ENCODE measurements at regions of chr2 and their contacts with region 1.

Region 1: GRCh38 chr2:8312861-8313830 is 368.7 kb upstream of the ID2 start:
- DNase-seq: peak; percentile 96
- ATAC-seq: peak; percentile 81
- H3K4me3 ChIP-seq: no peak overlapping the region; the same call in 1 of the 2 replicates
- H3K27ac ChIP-seq: peak overlapping the region; percentile 72
- H3K4me1 ChIP-seq: peaks cover 53% of the 10 kb centered on the region
- H3K27me3 ChIP-seq: no peaks in the 10 kb centered on the region
- CTCF ChIP-seq: no peak
- EP300 ChIP-seq: peak; percentile 46 to 86; a peak in 3 of 4 replicates
- POLR2A ChIP-seq: no peak
- RAD21 ChIP-seq: peak; percentile 29

Region 2: DNA sequence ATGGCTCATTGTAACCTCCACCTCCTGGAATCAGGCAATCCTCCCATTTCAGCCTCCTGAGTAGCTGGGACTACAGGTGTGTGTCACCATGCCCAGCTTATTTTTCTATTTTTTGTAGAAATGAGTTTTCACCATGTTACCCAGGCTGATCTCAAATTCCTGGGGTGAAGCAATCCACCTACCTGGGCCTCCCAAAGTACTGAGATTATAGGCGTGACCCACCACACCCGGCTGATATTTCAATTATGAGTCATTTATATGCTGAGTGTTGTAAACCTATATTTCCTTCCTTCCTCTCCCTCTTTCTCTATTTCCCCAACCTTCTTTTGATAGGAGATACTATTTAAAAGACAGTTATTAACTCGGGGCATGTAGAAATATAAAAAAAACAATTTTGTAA is 100.9 kb before region 1 on chr2:
- CTCF ChIA-PET with region 1: no interaction called
- POLR2A ChIA-PET with region 1: no interaction called
- RAD21 ChIA-PET with region 1: no interaction called
- SMC1A ChIA-PET with region 1: no interaction called
- in situ Hi-C with region 1: no loop called
- intact Hi-C with region 1: no loop called
- DNase-seq: no peak
- ATAC-seq: no peak
- H3K4me3 ChIP-seq: no peak overlapping the region
- H3K27ac ChIP-seq: no peak overlapping the region
- H3K4me1 ChIP-seq: no peaks in the 10 kb centered on the region
- H3K27me3 ChIP-seq: no peaks in the 10 kb centered on the region
- CTCF ChIP-seq: no peak
- EP300 ChIP-seq: no peak
- POLR2A ChIP-seq: no peak
- RAD21 ChIP-seq: no peak

Region 3: DNA sequence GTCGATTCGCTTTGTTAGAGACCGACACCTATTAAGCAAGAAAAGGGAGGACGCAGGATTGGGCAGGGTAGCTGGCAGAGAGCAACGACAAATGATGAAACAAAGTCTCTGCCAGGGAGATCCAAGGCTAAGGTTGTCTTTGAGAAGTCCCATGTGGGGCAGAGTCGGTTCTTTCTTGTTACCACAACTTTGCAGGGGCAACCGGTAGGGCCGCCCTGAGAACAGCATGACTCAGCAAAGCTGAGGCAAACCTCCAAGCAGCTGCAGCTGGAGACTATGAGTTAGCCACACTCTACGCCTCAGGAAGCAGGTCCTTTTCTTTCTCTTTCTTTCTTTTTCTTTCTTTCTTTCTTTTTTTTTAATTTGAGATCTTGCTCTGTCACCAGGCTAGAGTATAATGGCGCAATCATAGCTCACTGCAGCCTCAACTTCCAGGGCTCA is 83.6 kb before region 1 on chr2:
- CTCF ChIA-PET with region 1: interaction called, 6 read pairs
- POLR2A ChIA-PET with region 1: interaction called, 3 read pairs
- RAD21 ChIA-PET with region 1: interaction called, 23 read pairs
- SMC1A ChIA-PET with region 1: interaction called, 13 read pairs
- in situ Hi-C with region 1: no loop called
- intact Hi-C with region 1: loop called (anchors 1 kb)
- DNase-seq: no peak
- ATAC-seq: peak; percentile 92
- H3K4me3 ChIP-seq: no peak overlapping the region
- H3K27ac ChIP-seq: peak overlapping the region; percentile 35
- H3K4me1 ChIP-seq: peaks cover 24% of the 10 kb centered on the region
- H3K27me3 ChIP-seq: no peaks in the 10 kb centered on the region
- CTCF ChIP-seq: no peak
- EP300 ChIP-seq: peak in 1 of 2 experiments; percentile 68; a peak in 2 of 4 replicates
- POLR2A ChIP-seq: no peak
- RAD21 ChIP-seq: no peak; the same call in 1 of the 2 replicates

Region 4: GRCh38 chr2:8277921-8278571 is 35.1 kb before region 1 on chr2:
- CTCF ChIA-PET with region 1: interaction called, 4 read pairs
- POLR2A ChIA-PET with region 1: interaction called, 4 read pairs
- RAD21 ChIA-PET with region 1: interaction called, 17 read pairs
- SMC1A ChIA-PET with region 1: interaction called, 8 read pairs
- in situ Hi-C with region 1: no loop called
- intact Hi-C with region 1: no loop called
- DNase-seq: peak; percentile 56
- ATAC-seq: peak; percentile 95
- H3K4me3 ChIP-seq: peak overlapping the region; percentile 40; the same call in 1 of the 2 replicates
- H3K27ac ChIP-seq: peak overlapping the region; percentile 56
- H3K4me1 ChIP-seq: peaks cover 17% of the 10 kb centered on the region
- H3K27me3 ChIP-seq: no peaks in the 10 kb centered on the region
- CTCF ChIP-seq: no peak
- EP300 ChIP-seq: peak in 1 of 2 experiments; percentile 58; a peak in 1 of 4 replicates
- POLR2A ChIP-seq: no peak
- RAD21 ChIP-seq: no peak

Region 5: DNA sequence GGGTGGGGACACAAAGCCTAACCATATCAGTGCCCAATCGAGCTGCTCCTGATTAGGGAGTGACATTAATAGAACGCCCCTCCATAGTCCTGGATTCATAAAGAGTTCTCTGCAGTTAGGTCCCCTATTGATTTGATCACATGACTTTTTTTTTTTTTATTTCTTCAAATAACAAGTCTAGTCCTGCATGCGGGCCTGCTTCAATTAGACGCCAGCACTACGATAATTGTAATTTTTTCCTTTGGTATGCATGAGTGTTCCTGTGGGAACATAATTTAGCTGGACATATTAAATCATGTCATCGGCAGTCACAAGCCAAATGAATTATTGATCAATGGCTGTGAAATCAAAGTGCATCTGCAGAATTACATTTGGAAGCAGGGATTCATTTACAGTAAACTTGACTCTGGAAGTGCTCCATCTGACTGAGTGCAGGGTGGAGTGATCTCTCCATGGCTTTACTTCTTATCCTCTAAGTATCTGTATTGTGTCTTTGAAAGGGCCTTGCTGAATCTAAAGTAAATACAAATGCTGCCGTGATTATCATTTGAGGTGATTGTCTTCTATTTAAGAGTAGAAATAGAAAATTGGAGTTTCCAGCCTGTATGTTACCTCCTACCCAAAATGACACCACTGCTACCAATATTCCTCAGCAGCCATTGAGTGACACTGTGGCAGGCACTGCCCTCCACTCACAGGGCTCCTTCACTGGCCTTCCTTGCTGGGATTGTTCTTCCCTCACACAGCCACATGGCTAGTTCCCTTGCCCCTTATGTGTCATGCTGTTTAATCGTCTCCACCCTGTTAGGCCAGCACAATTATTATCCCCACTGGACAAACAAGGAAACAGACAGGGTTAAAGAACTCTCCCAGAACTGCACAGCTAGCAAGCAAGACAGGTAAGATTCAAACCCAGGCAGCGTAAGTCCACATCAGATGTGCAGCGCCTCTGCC is 31.3 kb after region 1 on chr2:
- CTCF ChIA-PET with region 1: interaction called, 7 read pairs
- POLR2A ChIA-PET with region 1: no interaction called
- RAD21 ChIA-PET with region 1: interaction called, 8 read pairs
- SMC1A ChIA-PET with region 1: interaction called, 19 read pairs
- in situ Hi-C with region 1: no loop called
- intact Hi-C with region 1: no loop called
- DNase-seq: no peak
- ATAC-seq: no peak
- H3K4me3 ChIP-seq: no peak overlapping the region
- H3K27ac ChIP-seq: no peak overlapping the region
- H3K4me1 ChIP-seq: peaks cover 7% of the 10 kb centered on the region
- H3K27me3 ChIP-seq: no peaks in the 10 kb centered on the region
- CTCF ChIP-seq: no peak
- EP300 ChIP-seq: no peak
- POLR2A ChIP-seq: no peak
- RAD21 ChIP-seq: no peak

Region 6: GRCh38 chr2:8472545-8473323 is 159.6 kb after region 1 on chr2:
- CTCF ChIA-PET with region 1: no interaction called
- POLR2A ChIA-PET with region 1: interaction called, 4 read pairs
- RAD21 ChIA-PET with region 1: interaction called, 25 read pairs
- SMC1A ChIA-PET with region 1: interaction called, 21 read pairs
- in situ Hi-C with region 1: no loop called
- intact Hi-C with region 1: no loop called
- DNase-seq: no peak
- ATAC-seq: peak; percentile 20
- H3K4me3 ChIP-seq: no peak overlapping the region
- H3K27ac ChIP-seq: peak overlapping the region; percentile 33
- H3K4me1 ChIP-seq: peaks cover 59% of the 10 kb centered on the region
- H3K27me3 ChIP-seq: no peaks in the 10 kb centered on the region
- CTCF ChIP-seq: no peak
- EP300 ChIP-seq: peak; percentile 10 to 24; a peak in 1 of 4 replicates
- POLR2A ChIP-seq: no peak
- RAD21 ChIP-seq: no peak

Region 7: GRCh38 chr2:8514796-8515758 is 201.9 kb after region 1 on chr2:
- CTCF ChIA-PET with region 1: interaction called, 5 read pairs
- POLR2A ChIA-PET with region 1: interaction called, 3 read pairs
- RAD21 ChIA-PET with region 1: interaction called, 12 read pairs
- SMC1A ChIA-PET with region 1: interaction called, 4 read pairs
- in situ Hi-C with region 1: no loop called
- intact Hi-C with region 1: loop called (anchors 2 kb)
- DNase-seq: peak; percentile 99
- ATAC-seq: peak; percentile 82
- H3K4me3 ChIP-seq: peak overlapping the region; percentile 51; the same call in 1 of the 2 replicates
- H3K27ac ChIP-seq: peak overlapping the region; percentile 93
- H3K4me1 ChIP-seq: peaks cover 46% of the 10 kb centered on the region
- H3K27me3 ChIP-seq: no peaks in the 10 kb centered on the region
- CTCF ChIP-seq: no peak
- EP300 ChIP-seq: peak; percentile 76 to 95; a peak in 3 of 4 replicates
- POLR2A ChIP-seq: no peak
- RAD21 ChIP-seq: peak; percentile 36; the same call in 1 of the 2 replicates